ENCODE measurements at regions of chr9 and their contacts with region 1.

Region 1: DNA sequence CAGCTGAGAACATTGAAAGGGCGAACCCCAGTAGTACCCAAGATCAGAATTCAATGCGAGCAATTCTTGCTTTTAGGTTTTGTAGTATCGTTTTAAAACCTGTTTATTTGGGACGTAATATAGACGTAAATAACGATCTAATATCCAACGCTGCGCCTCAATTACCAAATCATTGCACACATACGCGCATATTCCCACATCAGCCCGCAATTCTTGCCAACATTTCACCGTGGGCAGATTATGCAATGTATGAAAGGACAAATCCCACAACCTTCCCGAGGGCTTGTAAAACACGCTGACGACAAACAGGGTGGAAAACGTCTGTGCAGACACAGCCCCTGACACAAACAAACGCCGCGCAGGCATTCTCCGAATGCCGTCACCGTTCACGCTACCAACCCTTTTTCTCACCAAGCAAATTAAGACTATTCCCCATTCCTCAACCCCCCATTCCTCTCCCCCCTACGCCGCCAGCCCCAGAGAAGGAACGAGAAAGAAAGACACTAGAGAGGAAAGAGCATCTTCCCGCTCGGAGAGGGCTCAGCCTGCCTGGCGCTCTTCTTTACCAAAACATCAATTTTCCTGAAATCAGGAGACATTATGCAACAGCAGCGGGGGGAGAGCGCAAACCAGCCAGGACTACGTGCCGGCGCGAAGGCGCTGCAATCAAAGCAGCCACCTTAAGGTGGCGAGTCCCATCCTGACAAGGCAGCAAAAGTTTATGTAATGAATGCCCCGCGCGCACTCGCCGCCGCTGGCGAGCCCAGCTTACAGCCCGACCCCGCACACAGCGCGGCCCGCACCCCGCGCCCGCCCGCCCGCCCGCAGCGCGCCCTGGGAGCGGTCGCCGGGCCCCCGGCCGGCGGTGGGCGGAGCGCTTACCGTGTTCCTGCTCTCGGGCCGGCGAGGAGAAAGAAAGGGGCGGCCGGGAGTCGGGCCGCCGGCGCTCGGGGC is 597 bp downstream of the NFIL3 start:
- DNase-seq: peak; percentile 65
- H3K4me3 ChIP-seq: peak overlapping the region; percentile 65
- H3K27me3 ChIP-seq: no peaks in the 10 kb centered on the region
- CTCF ChIP-seq: peak; percentile 44

Region 2: GRCh38 chr9:90914868-90915483 is 508.1 kb before region 1 on chr9:
- CTCF ChIA-PET with region 1: interaction called, 152 read pairs
- POLR2A ChIA-PET with region 1: no interaction called
- DNase-seq: no peak
- H3K4me3 ChIP-seq: no peak overlapping the region
- H3K27me3 ChIP-seq: no peaks in the 10 kb centered on the region
- CTCF ChIP-seq: peak; percentile 84

Region 3: GRCh38 chr9:90921111-90921510 is 501.9 kb before region 1 on chr9:
- CTCF ChIA-PET with region 1: interaction called, 152 read pairs
- POLR2A ChIA-PET with region 1: no interaction called
- DNase-seq: no peak
- H3K4me3 ChIP-seq: no peak overlapping the region
- H3K27me3 ChIP-seq: no peaks in the 10 kb centered on the region
- CTCF ChIP-seq: no peak

Region 4: GRCh38 chr9:91036826-91037510 is 386.1 kb before region 1 on chr9:
- CTCF ChIA-PET with region 1: interaction called, 17 read pairs
- POLR2A ChIA-PET with region 1: no interaction called
- DNase-seq: no peak
- H3K4me3 ChIP-seq: no peak overlapping the region
- H3K27me3 ChIP-seq: no peaks in the 10 kb centered on the region
- CTCF ChIP-seq: peak; percentile 76

Region 5: DNA sequence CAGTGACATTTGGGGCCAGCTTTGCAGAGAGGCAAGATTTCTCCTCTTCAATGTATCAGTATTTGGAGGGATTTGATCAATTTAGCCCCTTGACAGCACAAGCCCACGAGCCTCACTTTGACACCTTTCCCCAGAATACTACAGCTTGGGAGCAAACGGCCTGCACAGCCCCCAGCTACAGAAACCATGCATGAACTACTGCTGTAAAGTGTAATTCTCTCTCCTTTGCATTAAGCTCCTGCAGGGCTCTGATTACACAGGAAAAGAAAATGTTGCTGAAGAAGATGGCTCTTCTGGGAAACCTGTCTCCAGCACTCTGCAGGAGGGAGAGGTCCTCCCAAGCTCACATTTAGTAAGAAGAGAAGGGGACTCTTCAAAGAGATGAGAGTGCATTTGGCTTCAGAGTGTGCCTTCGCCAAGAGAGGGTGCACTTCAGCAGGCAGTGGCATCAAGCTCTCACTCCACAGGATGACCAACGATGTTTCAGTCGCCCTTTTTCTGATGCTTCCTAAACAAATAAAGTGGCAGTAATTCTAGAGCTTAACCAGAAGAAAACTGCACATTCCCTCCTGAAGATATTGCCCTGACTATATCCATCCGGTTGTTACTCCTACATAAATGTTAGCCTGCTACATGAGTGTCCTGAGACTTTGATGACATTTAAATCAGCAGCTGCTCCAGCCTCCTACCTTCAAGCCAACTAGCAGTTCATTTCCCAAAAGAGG is 333.5 kb before region 1 on chr9:
- CTCF ChIA-PET with region 1: interaction called, 15 read pairs
- POLR2A ChIA-PET with region 1: no interaction called
- DNase-seq: no peak
- H3K4me3 ChIP-seq: no peak overlapping the region
- H3K27me3 ChIP-seq: no peaks in the 10 kb centered on the region
- CTCF ChIP-seq: peak; percentile 54

Region 6: GRCh38 chr9:91303741-91304415 is 119.2 kb before region 1 on chr9:
- CTCF ChIA-PET with region 1: interaction called, 3 read pairs
- POLR2A ChIA-PET with region 1: interaction called, 12 read pairs
- DNase-seq: no peak
- H3K4me3 ChIP-seq: no peak overlapping the region
- H3K27me3 ChIP-seq: no peaks in the 10 kb centered on the region
- CTCF ChIP-seq: no peak

Region 7: DNA sequence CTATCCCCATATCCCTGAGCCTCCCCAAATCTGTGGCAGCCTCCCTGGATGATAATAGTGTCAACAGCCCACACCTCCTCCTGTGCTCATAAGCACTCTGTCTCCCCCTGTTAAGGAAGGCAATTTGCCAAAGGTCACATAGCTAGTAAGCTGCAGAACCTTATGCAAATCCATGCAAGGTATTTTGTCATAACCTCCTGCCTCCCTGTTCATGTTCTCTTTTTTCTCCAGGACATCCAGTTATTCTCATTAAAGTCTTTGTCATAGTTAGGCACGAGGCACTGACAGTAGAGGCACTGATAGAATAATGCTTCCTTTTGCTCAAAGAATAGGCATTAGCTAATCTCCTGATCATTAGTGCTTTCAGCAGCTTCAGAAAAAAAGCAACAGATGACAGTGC is 51.1 kb before region 1 on chr9:
- CTCF ChIA-PET with region 1: no interaction called
- POLR2A ChIA-PET with region 1: interaction called, 10 read pairs
- DNase-seq: no peak
- H3K4me3 ChIP-seq: no peak overlapping the region
- H3K27me3 ChIP-seq: no peaks in the 10 kb centered on the region
- CTCF ChIP-seq: no peak